MCF 10A (cell line): ENCODE measurements at regions of chr4 and their contacts with region 1.

Region 1: DNA sequence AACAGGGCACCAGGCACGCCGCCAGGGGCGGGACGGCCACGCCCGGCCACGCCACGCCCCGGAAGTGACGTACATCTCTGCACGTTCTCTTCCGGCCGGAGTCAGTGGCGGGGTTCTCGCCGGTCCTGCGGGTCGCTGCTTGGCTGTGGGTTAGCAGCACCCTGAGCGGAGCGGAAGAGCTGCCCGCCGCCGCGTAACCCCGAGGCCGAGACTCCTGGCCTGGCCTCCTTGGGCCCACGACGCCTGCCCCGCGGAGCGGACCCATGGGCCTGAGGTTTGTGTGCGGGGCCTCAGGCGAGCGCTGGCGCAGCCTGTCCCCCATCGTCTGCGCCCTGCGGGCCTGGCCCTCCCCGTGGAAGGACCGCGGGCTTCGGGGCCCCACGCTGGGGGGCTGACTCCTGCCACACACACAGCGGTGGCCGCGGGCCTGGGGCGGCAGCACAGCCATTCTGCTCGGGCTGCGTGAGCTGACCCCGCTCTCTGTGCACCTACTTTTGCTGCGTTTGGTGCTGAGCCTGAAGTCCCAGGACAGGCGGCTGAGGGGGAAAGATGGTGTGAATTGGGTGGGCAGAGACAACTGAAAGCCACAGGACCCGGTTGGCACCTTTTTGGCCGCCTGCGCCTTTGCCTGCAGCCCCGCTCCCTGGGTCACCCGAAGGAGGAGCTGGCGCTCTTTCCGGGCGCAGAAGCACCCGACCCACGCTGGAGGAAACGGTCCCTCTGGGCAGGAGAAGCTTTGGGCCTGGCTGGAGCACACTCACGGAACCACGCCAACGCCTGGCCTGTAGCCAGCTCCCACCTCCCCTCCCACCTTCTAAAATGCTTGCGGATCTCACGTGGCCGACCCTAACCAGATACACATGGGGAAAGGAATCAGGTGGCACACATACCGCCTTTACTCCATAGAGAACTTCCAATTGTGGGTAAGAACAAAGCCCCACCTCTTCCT is 28.1 kb downstream of the NOP14 start:
- DNase-seq: peak; percentile 89
- H3K4me3 Mint-ChIP-seq: peak overlapping the region; percentile 76
- H3K27ac Mint-ChIP-seq: peak overlapping the region; percentile 84
- H3K4me1 Mint-ChIP-seq: peaks cover 33% of the 10 kb centered on the region
- H3K27me3 Mint-ChIP-seq: no peaks in the 10 kb centered on the region
- CTCF ChIP-seq: no peak

Region 2: DNA sequence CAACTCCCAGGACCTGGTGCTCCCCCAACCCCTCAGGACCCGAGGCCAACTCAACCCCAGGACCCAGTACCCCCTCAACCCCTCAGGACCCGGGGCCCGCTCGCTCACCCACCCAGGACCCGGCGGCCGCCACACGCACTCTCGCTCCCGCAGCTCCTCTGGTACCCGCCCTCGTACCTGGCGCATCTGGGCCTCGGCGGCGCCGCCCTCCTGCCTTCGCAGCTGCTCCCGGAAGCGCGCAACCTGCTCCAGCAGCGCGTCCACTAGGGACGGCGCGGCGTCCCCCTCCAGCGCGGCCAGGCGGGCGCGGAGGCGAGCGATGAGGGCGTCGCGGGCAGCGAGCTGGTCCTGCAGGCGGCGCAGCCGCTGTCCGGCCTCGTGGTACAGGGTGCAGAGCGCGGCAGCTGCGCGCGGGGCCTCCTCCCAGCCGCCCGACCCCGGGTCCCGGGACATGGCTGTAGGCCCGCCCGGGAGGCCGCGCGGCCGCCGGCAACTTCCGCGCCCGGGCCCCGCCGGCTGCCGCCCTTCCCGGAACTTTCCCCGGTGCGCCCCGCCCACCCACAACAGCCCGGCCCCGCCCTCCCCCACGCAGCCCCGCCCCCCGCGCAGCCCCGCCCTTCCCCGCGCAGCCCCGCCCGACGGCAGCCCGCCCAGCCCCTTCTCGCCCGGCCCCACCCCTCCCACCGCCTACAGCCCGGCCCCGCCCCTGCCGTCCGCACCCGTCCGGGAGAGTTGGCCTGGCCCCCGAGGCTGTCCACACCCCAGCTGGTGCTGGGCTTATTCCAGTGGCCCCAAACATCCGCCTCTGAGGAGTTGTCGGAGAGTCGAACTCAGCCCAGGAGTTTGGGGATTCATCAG is 179.0 kb before region 1 on chr4 and contains the start of gene TNIP2:
- CTCF ChIA-PET with region 1: interaction called, 4 read pairs
- POLR2A ChIA-PET with region 1: interaction called, 27 read pairs
- intact Hi-C with region 1: loop called (anchors 2 kb)
- DNase-seq: peak; percentile 80
- H3K4me3 Mint-ChIP-seq: peak within 1 kb of the TSS; percentile 68
- H3K27ac Mint-ChIP-seq: peak within 1 kb of the TSS; percentile 22
- H3K4me1 Mint-ChIP-seq: peaks cover 22% of the 10 kb centered on the region
- H3K27me3 Mint-ChIP-seq: no peaks in the 10 kb centered on the region
- CTCF ChIP-seq: no peak
- total RNA-seq, gene TNIP2: 40.5 and 46.1 TPM in 2 replicates

Region 3: DNA sequence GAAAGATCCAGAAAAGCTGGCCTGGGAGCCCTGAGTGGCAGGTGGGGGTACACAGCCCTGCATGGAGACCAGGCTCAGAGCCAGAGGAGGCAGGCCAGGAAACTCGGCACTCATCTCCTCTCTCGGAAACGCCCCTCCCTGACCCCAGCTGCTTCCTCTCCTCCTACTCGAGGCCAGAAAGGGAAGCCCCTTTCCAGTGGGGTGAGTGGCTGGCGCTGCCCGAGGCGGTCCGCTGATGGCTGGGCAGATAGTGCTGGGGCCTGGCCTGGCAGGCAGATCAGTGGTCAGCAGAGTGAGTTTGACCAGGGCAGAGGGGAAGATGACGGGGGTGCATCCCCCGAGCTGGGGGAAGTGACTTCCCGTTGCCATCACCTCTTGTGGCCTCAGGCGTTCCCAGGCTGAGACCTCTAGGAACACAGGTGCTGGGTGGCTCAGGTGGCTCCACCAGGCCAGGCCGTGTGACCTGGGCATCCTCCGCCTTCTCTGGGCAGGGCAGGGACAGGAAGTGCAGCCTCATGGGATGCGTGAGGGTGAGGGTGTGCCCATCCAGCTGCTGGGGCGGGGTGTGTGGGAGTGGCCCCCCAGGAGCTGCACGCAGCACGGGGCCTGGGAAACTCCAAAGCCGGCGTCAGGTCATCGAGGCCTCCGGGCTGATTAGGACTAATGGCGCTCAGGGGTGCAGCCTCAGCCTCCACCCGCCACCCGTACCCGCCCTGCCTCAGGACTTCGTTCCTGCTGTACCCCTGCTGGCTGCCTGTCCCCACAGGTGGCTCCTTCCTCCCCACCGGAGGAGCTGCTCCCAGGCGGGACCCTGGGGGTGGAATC is 136.5 kb before region 1 on chr4:
- CTCF ChIA-PET with region 1: no interaction called
- POLR2A ChIA-PET with region 1: interaction called, 19 read pairs
- intact Hi-C with region 1: no loop called
- DNase-seq: peak; percentile 47
- H3K4me3 Mint-ChIP-seq: peak overlapping the region; percentile 16
- H3K27ac Mint-ChIP-seq: peak overlapping the region; percentile 67
- H3K4me1 Mint-ChIP-seq: peaks cover 69% of the 10 kb centered on the region
- H3K27me3 Mint-ChIP-seq: no peaks in the 10 kb centered on the region
- CTCF ChIP-seq: no peak

Region 4: DNA sequence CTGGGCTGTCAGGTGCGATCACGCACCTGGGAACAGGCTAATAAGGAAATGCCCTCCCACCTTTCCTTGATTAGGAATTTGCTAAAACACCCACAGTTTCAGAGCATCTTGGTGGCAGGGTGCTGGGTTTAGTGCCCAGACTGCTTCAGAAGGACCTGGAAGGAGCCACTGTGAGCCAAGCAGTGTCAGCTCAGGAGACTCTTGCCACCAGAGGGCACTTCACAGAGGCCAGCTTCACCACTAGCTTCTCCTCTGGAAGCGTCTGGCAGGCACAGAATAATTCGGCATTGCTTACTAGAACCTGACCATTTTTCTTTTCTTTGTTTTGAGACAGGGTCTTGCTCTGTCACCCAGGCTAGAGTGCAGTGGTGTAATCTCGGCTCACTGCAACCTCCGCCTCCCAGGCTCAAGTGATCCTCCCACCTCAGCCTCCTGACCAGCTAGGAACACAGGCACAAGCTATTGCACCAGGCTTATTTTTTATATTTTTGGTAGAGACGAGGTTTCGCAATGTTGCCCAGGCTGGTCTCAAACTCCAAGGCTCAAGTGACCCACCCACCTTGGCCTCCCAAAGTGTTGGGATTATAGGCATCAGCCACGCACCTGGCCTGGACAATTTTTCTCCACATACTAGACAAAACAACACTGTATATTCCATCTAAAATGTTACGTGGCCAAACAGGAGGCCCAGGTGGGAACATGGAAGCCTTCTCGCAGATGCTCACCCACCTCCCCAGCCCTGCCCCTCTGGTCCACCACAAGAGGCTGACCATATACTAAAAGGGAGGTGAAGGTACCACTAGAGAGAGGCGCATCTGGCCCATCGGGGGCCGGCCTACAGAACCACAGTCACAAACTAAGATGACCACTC is 14.0 kb after region 1 on chr4:
- CTCF ChIA-PET with region 1: interaction called, 30 read pairs
- POLR2A ChIA-PET with region 1: interaction called, 43 read pairs
- intact Hi-C with region 1: no loop called
- DNase-seq: peak; percentile 42
- H3K4me3 Mint-ChIP-seq: no peak overlapping the region
- H3K27ac Mint-ChIP-seq: no peak overlapping the region
- H3K4me1 Mint-ChIP-seq: peaks cover 10% of the 10 kb centered on the region
- H3K27me3 Mint-ChIP-seq: no peaks in the 10 kb centered on the region
- CTCF ChIP-seq: peak; percentile 25

Region 5: GRCh38 chr4:2963175-2963965 is 28.3 kb after region 1 on chr4 and contains the starts of genes GRK4 and NOP14:
- CTCF ChIA-PET with region 1: interaction called, 3 read pairs
- POLR2A ChIA-PET with region 1: interaction called, 120 read pairs
- intact Hi-C with region 1: loop called (anchors 2 kb)
- DNase-seq: peak; percentile 97
- H3K4me3 Mint-ChIP-seq: peak within 1 kb of the TSS; percentile 88
- H3K27ac Mint-ChIP-seq: peak within 1 kb of the TSS; percentile 94
- H3K4me1 Mint-ChIP-seq: peaks cover 16% of the 10 kb centered on the region
- H3K27me3 Mint-ChIP-seq: no peaks in the 10 kb centered on the region
- CTCF ChIP-seq: peak; percentile 36
- total RNA-seq, gene GRK4: 4.5 and 5.9 TPM in 2 replicates
- total RNA-seq, gene NOP14: 44.0 and 65.6 TPM in 2 replicates

Region 6: DNA sequence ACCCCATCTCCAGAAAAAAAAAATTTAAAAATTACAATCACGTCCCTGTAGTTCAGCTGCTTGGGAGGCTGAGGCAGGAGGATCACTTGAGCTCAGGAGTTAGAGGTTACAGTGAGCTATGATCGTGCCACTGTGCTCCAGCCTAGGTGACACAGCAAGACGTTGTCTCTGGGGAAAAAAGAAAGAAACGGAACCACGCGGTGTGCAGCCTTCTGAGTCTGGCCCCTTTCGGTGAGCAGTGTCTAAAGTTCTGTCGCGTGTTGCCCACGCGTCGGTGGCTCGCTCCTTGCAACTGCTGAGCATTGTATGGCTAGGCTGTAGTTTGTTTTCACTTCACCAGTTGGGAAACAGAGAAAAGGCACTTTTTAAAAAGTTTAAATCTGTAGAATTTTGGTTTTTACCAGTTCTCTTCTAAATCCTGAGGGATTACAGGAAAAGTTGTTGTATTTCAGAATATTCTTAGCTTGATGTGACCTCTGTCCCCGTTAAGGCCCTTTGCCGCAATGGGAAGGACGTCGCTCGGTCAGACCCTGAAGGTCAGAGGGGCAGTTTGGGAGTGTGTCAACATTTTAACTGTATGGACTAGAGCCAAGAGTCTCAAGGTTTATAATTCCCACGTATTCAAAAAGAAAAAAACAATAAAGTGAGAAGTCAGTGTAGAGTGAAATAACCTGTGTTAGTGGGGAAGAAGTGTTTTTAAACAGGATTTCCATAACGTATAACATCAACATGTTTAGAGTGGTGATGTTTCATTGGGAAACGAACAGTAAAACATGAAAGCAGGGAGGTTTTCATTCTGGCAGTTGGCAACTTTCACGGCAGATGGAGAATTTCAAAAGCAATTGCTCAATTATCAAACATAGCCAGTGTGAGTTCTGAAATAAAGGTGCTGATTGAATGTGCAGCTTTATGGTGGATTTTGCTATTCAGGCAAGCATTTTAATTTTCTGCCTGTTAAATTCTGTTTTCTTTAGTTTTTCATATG is 268.0 kb after region 1 on chr4:
- CTCF ChIA-PET with region 1: no interaction called
- POLR2A ChIA-PET with region 1: no interaction called
- intact Hi-C with region 1: no loop called
- DNase-seq: no peak
- H3K4me3 Mint-ChIP-seq: no peak overlapping the region
- H3K27ac Mint-ChIP-seq: no peak overlapping the region
- H3K4me1 Mint-ChIP-seq: no peaks in the 10 kb centered on the region
- H3K27me3 Mint-ChIP-seq: no peaks in the 10 kb centered on the region
- CTCF ChIP-seq: no peak

Region 7: DNA sequence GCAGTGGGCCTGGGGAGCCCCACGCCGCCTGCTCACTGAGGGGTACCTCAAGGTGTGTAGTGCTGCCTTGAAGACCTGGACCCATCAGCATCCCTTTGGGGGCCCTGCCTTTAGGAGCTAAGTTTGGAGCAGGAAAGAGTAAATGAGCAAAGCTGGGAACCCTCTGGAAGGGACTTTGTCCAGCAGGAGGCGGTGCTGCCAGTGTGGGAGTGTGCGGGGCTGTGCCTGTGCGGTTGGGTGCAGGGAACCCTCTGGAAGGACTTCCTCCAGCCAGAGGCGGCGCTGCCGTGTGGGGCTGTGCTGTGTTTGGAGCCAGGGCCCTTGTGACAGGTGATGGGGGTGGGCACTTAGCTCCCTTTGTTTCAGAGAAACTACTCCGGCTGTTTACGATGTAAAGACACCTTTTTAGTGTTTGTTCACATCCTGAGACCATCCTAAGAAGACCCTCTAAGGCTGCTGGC is 383.5 kb after region 1 on chr4:
- CTCF ChIA-PET with region 1: no interaction called
- POLR2A ChIA-PET with region 1: no interaction called
- intact Hi-C with region 1: no loop called
- DNase-seq: no peak
- H3K4me3 Mint-ChIP-seq: no peak overlapping the region
- H3K27ac Mint-ChIP-seq: no peak overlapping the region
- H3K4me1 Mint-ChIP-seq: no peaks in the 10 kb centered on the region
- H3K27me3 Mint-ChIP-seq: no peaks in the 10 kb centered on the region
- CTCF ChIP-seq: no peak